ENCODE measurements at regions of chr16 and their contacts with region 1.

Region 1: DNA sequence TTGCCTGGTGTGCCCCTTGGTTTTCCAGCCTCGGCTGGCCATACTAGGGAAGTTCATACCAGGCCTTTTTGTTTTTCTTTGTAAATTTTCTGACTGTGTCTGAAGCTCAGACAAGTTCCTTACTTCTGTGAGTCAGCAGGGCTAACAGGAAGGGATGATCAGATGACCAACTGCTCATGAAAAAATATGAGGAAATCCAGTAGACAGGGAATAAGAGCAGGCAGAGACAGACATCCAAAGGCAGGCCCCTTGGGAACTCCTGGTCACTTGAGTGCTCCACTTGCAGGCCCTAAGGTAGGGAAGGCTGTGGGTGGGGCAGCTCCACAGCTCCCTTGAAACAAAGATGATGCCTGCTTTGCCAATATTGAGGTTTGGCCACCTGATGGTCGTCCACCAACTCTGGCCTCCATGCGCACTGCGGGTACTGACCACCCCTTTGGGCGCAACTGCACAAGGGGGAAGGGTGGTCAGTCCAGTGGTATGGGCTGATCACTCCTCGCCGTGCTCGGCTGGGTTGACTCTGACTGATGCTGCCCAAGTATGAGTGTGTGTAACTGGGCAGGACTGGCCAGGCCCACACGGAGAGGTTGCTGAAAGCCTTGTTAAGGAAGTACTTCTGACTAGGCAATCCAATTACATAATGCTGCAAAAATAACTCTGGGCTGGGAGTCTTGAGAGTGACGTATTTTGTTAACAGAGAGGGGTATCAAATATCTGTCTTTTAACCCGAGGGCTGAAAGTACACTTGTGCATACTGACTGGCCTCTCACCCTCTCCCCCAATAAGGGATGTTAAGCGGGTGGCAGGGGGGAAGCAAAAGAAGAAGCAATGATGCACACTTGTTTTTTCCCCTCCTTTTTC is 20.8 kb upstream of the ZFHX3 start:
- DNase-seq: no peak
- H3K4me3 ChIP-seq: no peak overlapping the region
- H3K27ac ChIP-seq: peak overlapping the region in 6 of 8 donors; percentile 16 to 85 (median 72)
- H3K4me1 ChIP-seq: peaks cover 6 to 76% (median 48%) of the 10 kb centered on the region in 6 donors
- H3K27me3 ChIP-seq: peaks cover 9 to 86% (median 44%) of the 10 kb centered on the region in 7 donors
- CTCF ChIP-seq: no peak
- POLR2A ChIP-seq: no peak

Region 2: GRCh38 chr16:73172241-73172972 is 103.6 kb after region 1 on chr16:
- intact Hi-C with region 1: loop called (anchors 10 kb)
- DNase-seq: no peak
- H3K4me3 ChIP-seq: no peak overlapping the region
- H3K27ac ChIP-seq: peak overlapping the region in 5 of 8 donors; percentile 34 to 59 (median 49)
- H3K4me1 ChIP-seq: peaks cover 0 to 36% (median 9%) of the 10 kb centered on the region in 6 donors
- H3K27me3 ChIP-seq: no peaks in the 10 kb centered on the region
- CTCF ChIP-seq: peak in 1 of 11 experiments; percentile 33
- POLR2A ChIP-seq: no peak

Region 3: GRCh38 chr16:73196670-73197069 is 127.9 kb after region 1 on chr16:
- intact Hi-C with region 1: no loop called
- DNase-seq: no peak
- H3K4me3 ChIP-seq: no peak overlapping the region
- H3K27ac ChIP-seq: no peak overlapping the region
- H3K4me1 ChIP-seq: no peaks in the 10 kb centered on the region
- H3K27me3 ChIP-seq: no peaks in the 10 kb centered on the region
- CTCF ChIP-seq: peak in 9 of 11 experiments; percentile 20 to 69 (median 55)
- POLR2A ChIP-seq: no peak